Mammary epithelial cell (primary cell): ENCODE measurements at regions of chr10 and their contacts with region 1.

Region 1: GRCh38 chr10:38174341-38174740 is 80.2 kb downstream of the ZNF37A start:
- DNase-seq: no peak
- H3K4me3 ChIP-seq: no peak overlapping the region
- H3K27ac ChIP-seq: no peak overlapping the region
- H3K4me1 ChIP-seq: no peaks in the 10 kb centered on the region
- H3K27me3 ChIP-seq: no peaks in the 10 kb centered on the region
- CTCF ChIP-seq: no peak

Region 2: GRCh38 chr10:38209319-38209718 is 35.0 kb after region 1 on chr10:
- CTCF ChIA-PET with region 1: no interaction called
- dilution Hi-C with region 1: loop called (anchors 5 kb)
- in situ Hi-C with region 1: no loop called
- intact Hi-C with region 1: no loop called
- DNase-seq: peak; percentile 0
- H3K4me3 ChIP-seq: no peak overlapping the region
- H3K27ac ChIP-seq: no peak overlapping the region
- H3K4me1 ChIP-seq: no peaks in the 10 kb centered on the region
- H3K27me3 ChIP-seq: no peaks in the 10 kb centered on the region
- CTCF ChIP-seq: no peak